ENCODE measurements at regions of chr10 and their contacts with region 1.

Region 1: DNA sequence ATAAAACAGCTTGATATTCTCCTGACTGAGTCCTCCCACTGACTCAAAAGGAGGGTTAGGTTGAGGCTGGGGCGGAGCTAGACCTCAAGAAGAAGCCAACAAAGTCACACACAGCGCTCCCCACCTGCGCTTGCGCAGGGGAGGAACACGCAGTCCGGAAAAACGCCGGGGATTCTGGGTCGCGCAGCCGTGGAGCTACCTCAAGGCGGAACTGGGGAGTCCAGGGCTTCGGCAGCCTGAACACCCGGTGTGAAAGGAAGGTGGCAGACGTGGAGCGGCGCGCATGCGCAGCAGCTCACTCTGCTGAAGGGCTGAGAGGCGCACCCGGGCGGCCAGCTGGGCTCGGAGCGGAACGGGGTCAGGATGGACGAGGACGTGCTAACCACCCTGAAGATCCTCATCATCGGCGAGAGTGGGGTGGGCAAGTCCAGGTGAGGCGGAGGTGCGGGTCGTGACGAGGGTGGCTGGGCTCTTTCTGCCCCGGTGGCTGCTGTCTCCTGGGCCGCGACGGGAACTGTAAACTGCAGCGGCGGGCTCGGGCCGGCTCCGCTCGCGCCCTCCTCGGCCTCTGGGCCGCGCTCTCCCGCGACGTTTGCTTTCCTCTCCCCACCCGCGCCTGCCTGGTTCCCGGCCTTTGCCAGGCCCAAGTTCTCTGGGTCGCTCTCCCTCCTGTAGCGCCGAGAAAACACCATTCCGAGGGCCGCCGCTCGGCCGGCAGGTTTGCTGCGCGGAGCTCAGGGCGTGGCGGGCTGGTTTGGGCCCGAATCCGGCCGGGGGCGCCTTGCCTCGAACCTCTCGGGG is at the start of gene RAB18:
- DNase-seq: peak; percentile 98
- H3K4me3 Mint-ChIP-seq: peak within 1 kb of the TSS; percentile 98
- H3K27ac Mint-ChIP-seq: peak within 1 kb of the TSS; percentile 94
- H3K4me1 Mint-ChIP-seq: peaks cover 46% of the 10 kb centered on the region
- H3K27me3 Mint-ChIP-seq: no peaks in the 10 kb centered on the region
- total RNA-seq, gene RAB18: 69.5 to 72.0 TPM

Region 2: GRCh38 chr10:27440478-27440877 is 63.7 kb before region 1 on chr10:
- CTCF ChIA-PET with region 1: no interaction called
- POLR2A ChIA-PET with region 1: no interaction called
- DNase-seq: no peak
- H3K4me3 Mint-ChIP-seq: no peak overlapping the region
- H3K27ac Mint-ChIP-seq: no peak overlapping the region
- H3K4me1 Mint-ChIP-seq: no peaks in the 10 kb centered on the region
- H3K27me3 Mint-ChIP-seq: peaks cover 11% of the 10 kb centered on the region

Region 3: GRCh38 chr10:27525819-27526218 is 21.6 kb after region 1 on chr10:
- CTCF ChIA-PET with region 1: interaction called, 5 read pairs
- POLR2A ChIA-PET with region 1: interaction called, 18 read pairs
- DNase-seq: no peak
- H3K4me3 Mint-ChIP-seq: no peak overlapping the region
- H3K27ac Mint-ChIP-seq: no peak overlapping the region
- H3K4me1 Mint-ChIP-seq: peaks cover 60% of the 10 kb centered on the region
- H3K27me3 Mint-ChIP-seq: no peaks in the 10 kb centered on the region

Region 4: DNA sequence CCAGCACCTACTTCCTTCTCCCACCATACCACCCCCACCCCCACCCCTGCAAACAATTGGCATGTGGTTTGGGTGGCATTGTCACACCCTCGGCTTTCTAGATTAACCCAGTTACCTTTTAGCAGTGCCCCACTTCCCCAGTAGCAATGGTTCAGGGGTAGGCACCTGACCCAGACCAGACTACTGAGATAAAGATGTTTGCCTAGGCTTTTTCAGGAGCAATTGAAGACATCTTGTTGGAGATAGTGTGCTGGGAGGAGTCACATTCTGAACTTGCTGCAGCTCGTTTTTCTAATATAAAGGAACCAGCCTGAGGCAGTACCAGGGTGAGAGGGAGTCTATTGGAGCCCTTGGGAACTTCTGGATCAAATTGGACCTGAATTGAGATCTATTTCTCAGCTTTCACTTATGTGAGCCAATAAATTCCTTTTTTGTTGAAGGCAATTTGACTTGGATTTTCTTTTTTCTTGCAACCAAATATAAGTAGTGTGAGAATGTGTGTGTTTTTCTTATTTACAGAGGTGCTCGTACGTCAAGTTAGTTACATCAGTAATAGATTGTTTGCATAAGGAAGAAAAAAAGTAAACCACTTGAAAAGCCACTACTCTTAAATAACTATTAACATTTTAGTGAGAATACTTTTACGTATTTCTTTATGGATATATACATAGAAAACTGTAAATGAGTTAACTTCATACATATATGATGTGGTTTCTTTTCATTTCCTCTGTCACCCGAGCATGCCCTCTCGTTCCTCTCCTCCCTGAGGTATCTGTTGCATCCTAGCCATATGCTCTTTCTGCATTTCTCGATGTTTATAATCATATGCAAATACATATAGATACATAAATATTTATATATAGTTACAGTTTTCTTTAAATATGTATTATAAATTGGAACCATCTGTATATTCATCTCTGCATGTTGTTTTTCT is 37.9 kb after region 1 on chr10:
- CTCF ChIA-PET with region 1: interaction called, 3 read pairs
- POLR2A ChIA-PET with region 1: interaction called, 25 read pairs
- DNase-seq: peak; percentile 22
- H3K4me3 Mint-ChIP-seq: no peak overlapping the region
- H3K27ac Mint-ChIP-seq: peak overlapping the region; percentile 50
- H3K4me1 Mint-ChIP-seq: peaks cover 19% of the 10 kb centered on the region
- H3K27me3 Mint-ChIP-seq: no peaks in the 10 kb centered on the region